ENCODE measurements at regions of chr3 and their contacts with region 1.

Region 1: DNA sequence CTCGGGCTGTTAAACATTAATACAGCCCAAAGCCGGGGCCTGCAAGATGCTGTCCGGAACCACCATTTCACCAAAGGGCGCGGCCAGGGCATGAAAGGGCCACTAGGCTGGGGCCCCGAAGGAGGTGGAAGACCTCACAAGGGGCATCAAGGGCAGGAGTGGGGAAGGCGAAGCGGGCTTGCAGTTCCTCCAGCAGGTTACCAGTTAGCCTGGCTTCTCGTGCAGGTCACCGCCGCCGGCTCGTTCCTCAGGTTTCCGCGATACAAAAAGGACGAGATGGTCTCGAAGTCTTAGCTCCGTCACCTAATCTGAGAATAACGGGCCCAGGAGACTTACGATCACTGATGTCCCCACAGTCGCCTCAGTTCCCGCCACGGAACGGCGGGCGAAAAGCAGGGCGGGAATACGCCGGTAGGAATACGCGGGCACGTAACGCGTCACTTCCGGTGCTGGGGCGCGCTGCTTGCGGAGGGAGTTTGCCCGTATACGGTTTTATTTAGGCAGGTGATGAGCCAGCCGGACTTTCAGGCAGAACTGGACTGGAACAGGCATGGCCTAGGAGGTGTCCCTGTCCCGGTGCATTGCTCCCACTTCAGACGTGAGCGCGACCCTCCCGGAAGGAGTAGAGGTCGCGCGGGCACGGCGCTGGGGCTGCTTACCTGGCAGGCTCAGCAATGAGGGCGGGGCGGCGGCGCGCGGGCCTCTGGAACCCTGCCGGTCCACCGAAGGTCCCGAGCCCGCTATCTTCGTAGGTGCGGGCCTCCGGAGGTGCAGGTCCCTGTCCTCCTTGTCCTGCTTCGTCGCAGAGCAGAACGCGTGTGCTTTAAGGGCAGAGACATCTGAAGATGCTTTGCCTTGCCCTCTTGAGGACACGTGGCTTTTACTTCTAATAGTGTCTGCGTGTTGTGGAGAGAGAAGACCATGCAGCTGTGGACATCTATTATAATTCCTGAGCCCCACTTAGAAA is at the start of gene RFC4:
- DNase-seq: peak; percentile 60
- ATAC-seq: peak; percentile 98
- H3K4me3 ChIP-seq: peak within 1 kb of the TSS; percentile 59
- H3K27ac ChIP-seq: peak within 1 kb of the TSS; percentile 87
- H3K4me1 ChIP-seq: no peaks in the 10 kb centered on the region
- H3K27me3 ChIP-seq: no peaks in the 10 kb centered on the region
- CTCF ChIP-seq: no peak
- POLR2A ChIP-seq: no peak
- RAD21 ChIP-seq: no peak
- total RNA-seq, gene RFC4: 19.5 and 34.4 TPM in 2 replicates

Region 2: GRCh38 chr3:185976977-185977678 is 829.2 kb before region 1 on chr3:
- CTCF ChIA-PET with region 1: no interaction called
- POLR2A ChIA-PET with region 1: no interaction called
- dilution Hi-C with region 1: no loop called
- in situ Hi-C with region 1: loop called (anchors 25 kb)
- intact Hi-C with region 1: no loop called
- DNase-seq: peak; percentile 64
- ATAC-seq: peak; percentile 93
- H3K4me3 ChIP-seq: no peak overlapping the region
- H3K27ac ChIP-seq: no peak overlapping the region
- H3K4me1 ChIP-seq: 0 out of 2 replicates have a peak, but pooled peaks cover 2% of the 10 kb centered on the region
- H3K27me3 ChIP-seq: no peaks in the 10 kb centered on the region
- CTCF ChIP-seq: peak; percentile 78
- POLR2A ChIP-seq: no peak
- RAD21 ChIP-seq: peak; percentile 71

Region 3: DNA sequence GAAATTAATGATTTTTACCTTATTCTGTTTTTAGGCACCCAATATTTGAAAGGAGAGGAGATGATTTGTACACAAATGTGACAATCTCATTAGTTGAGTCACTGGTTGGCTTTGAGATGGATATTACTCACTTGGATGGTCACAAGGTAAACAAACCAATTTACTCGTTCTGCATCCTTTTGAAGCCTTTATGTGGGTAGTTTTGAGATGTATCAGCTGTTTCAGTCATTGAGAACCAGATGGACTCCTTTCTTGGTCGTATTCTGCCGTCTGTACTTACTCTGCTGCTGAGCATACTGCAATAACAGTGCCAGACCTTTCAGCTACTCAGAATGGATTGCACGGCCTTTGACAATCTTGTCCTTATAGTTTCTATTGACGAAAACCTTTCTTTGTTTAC is 222.5 kb before region 1 on chr3:
- CTCF ChIA-PET with region 1: no interaction called
- POLR2A ChIA-PET with region 1: no interaction called
- dilution Hi-C with region 1: no loop called
- in situ Hi-C with region 1: no loop called
- intact Hi-C with region 1: no loop called
- DNase-seq: peak; percentile 74
- ATAC-seq: peak; percentile 80
- H3K4me3 ChIP-seq: no peak overlapping the region
- H3K27ac ChIP-seq: no peak overlapping the region
- H3K4me1 ChIP-seq: no peaks in the 10 kb centered on the region; the same call in 1 of the 2 replicates
- H3K27me3 ChIP-seq: no peaks in the 10 kb centered on the region
- CTCF ChIP-seq: no peak
- POLR2A ChIP-seq: no peak
- RAD21 ChIP-seq: no peak

Region 4: DNA sequence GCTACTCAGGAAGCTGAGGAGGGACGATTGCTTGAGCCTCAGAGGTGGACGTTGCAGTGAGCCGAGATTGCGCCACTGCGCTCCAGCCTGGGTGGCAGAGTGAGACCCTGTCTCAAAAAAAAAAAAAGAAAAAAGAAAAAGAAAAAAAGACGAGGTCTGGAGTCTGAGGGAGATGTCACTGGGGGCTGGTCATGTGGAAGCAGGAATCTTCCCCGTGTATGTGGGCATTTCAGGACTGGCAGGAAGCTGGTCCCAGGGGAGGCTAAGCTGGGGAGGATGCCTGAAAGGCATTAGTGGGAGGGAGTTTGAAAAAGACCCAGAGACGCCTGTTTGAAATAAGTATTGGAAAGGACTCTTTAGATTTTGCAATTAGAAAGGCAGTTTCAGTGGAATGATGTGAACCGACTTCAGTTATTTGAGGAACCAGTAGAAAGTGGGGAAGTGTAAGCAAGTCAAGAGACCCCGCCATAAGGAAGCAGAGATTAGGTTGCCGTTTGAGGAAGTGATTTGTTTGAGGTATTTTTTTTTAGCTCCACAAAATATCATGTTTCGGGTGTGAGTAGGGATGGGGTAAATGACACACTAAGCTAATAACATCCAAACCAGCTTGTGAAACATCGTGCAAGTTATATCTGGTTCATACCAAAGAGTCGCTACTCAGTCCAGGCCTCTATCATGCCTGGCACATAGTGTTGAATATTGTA is 179.4 kb after region 1 on chr3:
- CTCF ChIA-PET with region 1: no interaction called
- POLR2A ChIA-PET with region 1: no interaction called
- dilution Hi-C with region 1: no loop called
- in situ Hi-C with region 1: no loop called
- intact Hi-C with region 1: no loop called
- DNase-seq: no peak
- ATAC-seq: no peak
- H3K4me3 ChIP-seq: no peak overlapping the region
- H3K27ac ChIP-seq: no peak overlapping the region
- H3K4me1 ChIP-seq: 0 out of 2 replicates have a peak, but pooled peaks cover under 1% of the 10 kb centered on the region
- H3K27me3 ChIP-seq: no peaks in the 10 kb centered on the region
- CTCF ChIP-seq: no peak
- POLR2A ChIP-seq: no peak
- RAD21 ChIP-seq: no peak